Endothelial cell of umbilical vein (primary cell): ENCODE measurements at regions of chr6 and their contacts with region 1.

Region 1: DNA sequence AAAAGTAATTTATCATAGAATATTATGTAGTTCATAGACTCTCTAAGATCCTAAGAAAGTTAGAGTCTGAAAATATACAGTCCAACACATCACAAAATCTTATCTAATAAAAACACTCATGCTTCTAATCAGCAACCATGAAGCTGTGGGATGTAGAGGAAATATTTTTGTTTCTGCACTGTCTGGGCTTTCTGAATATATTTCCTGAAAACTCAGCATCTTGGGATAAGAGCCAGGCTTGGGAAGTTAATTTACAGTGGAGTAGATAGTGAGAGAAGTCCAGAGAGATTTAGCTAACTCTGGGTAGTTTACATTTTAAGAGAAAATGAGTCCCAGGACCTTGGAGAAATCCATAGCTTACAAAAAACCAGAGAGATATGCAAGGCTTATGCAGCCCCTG is 150.4 kb upstream of the BMP5 start:
- DNase-seq: peak; percentile 96
- H3K4me3 ChIP-seq: peak overlapping the region in 1 of 3 experiments; percentile 54
- H3K27ac ChIP-seq: peak overlapping the region; percentile 91
- H3K4me1 ChIP-seq: peaks cover 41% of the 10 kb centered on the region
- H3K27me3 ChIP-seq: no peaks in the 10 kb centered on the region
- CTCF ChIP-seq: no peak
- POLR2A ChIP-seq: peak; percentile 81

Region 2: DNA sequence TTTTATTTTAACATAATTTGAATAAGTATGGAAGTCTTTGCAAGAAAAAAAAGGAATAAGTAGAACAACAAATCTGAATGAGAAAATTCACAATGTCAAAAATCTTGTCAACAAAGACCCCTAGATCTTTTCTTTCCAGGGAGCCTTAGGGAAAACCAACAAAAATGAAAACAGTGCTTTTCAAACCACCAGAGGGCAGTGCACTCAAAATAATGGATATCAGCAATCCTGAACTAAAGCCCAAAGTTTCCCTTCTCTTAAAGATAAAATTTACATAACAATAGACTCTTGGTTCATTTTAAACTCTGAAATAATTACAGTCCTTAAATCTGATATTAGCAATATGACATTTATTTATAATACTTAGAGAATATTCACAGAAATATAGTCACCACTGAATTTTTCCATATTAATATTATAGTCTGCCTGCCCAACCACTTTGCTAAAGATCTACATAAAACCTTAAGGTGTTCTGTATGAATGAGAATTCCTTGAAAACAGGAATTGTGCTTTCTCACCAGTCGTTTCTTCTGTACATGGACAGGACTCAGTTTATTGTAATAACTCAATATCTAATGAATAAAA is 45.1 kb before region 1 on chr6:
- CTCF ChIA-PET with region 1: interaction called, 4 read pairs
- POLR2A ChIA-PET with region 1: no interaction called
- dilution Hi-C with region 1: no loop called
- intact Hi-C with region 1: loop called (anchors 2 kb)
- DNase-seq: peak; percentile 66
- H3K4me3 ChIP-seq: no peak overlapping the region
- H3K27ac ChIP-seq: no peak overlapping the region
- H3K4me1 ChIP-seq: no peaks in the 10 kb centered on the region
- H3K27me3 ChIP-seq: no peaks in the 10 kb centered on the region
- CTCF ChIP-seq: peak; percentile 39
- POLR2A ChIP-seq: no peak

Region 3: DNA sequence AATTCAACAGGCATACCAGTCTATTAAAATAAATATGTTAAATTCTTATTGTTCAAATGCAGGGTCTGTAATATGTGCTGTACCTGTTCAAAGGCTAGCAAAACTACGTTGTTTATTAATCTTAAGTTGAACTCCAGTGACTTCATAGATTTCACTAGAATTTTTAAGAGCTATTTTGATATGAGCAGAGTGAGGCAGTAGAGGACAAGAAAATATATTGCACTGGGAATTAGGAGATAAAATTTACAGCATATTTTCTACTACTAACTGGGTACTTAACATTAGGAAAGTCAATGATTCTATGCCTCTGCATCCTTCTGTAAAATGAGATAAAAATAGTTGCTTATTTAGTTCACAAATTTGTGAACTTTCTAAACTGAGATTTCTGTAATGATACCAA is 11.8 kb after region 1 on chr6:
- CTCF ChIA-PET with region 1: interaction called, 11 read pairs
- POLR2A ChIA-PET with region 1: no interaction called
- dilution Hi-C with region 1: no loop called
- intact Hi-C with region 1: no loop called
- DNase-seq: no peak
- H3K4me3 ChIP-seq: no peak overlapping the region
- H3K27ac ChIP-seq: no peak overlapping the region
- H3K4me1 ChIP-seq: no peaks in the 10 kb centered on the region
- H3K27me3 ChIP-seq: no peaks in the 10 kb centered on the region
- CTCF ChIP-seq: no peak
- POLR2A ChIP-seq: no peak

Region 4: GRCh38 chr6:56046576-56046975 is 20.8 kb after region 1 on chr6:
- CTCF ChIA-PET with region 1: interaction called, 7 read pairs
- POLR2A ChIA-PET with region 1: interaction called, 3 read pairs
- dilution Hi-C with region 1: no loop called
- intact Hi-C with region 1: loop called (anchors 1 kb)
- DNase-seq: peak; percentile 94
- H3K4me3 ChIP-seq: no peak overlapping the region
- H3K27ac ChIP-seq: peak overlapping the region; percentile 63
- H3K4me1 ChIP-seq: peaks cover 39% of the 10 kb centered on the region
- H3K27me3 ChIP-seq: no peaks in the 10 kb centered on the region
- CTCF ChIP-seq: no peak
- POLR2A ChIP-seq: no peak

Region 5: GRCh38 chr6:56144538-56145324 is 118.9 kb after region 1 on chr6:
- CTCF ChIA-PET with region 1: no interaction called
- POLR2A ChIA-PET with region 1: interaction called, 4 read pairs
- dilution Hi-C with region 1: no loop called
- intact Hi-C with region 1: loop called (anchors 1 kb)
- DNase-seq: peak; percentile 41
- H3K4me3 ChIP-seq: no peak overlapping the region
- H3K27ac ChIP-seq: no peak overlapping the region
- H3K4me1 ChIP-seq: peaks cover 33% of the 10 kb centered on the region
- H3K27me3 ChIP-seq: no peaks in the 10 kb centered on the region
- CTCF ChIP-seq: no peak
- POLR2A ChIP-seq: no peak

Region 6: GRCh38 chr6:56299916-56300315 is 274.1 kb after region 1 on chr6:
- CTCF ChIA-PET with region 1: no interaction called
- POLR2A ChIA-PET with region 1: no interaction called
- dilution Hi-C with region 1: no loop called
- intact Hi-C with region 1: loop called (anchors 1 kb)
- DNase-seq: peak; percentile 92
- H3K4me3 ChIP-seq: no peak overlapping the region
- H3K27ac ChIP-seq: peak overlapping the region; percentile 22
- H3K4me1 ChIP-seq: peaks cover 22% of the 10 kb centered on the region
- H3K27me3 ChIP-seq: no peaks in the 10 kb centered on the region
- CTCF ChIP-seq: no peak
- POLR2A ChIP-seq: no peak